ENCODE measurements at regions of chr22 and their contacts with region 1.

Region 1: GRCh38 chr22:37457093-37457893 is 28.9 kb downstream of the MFNG start:
- DNase-seq: no peak
- H3K4me3 ChIP-seq: no peak overlapping the region
- H3K27me3 ChIP-seq: no peaks in the 10 kb centered on the region; the same call in 1 of the 2 replicates
- CTCF ChIP-seq: peak; percentile 94

Region 2: DNA sequence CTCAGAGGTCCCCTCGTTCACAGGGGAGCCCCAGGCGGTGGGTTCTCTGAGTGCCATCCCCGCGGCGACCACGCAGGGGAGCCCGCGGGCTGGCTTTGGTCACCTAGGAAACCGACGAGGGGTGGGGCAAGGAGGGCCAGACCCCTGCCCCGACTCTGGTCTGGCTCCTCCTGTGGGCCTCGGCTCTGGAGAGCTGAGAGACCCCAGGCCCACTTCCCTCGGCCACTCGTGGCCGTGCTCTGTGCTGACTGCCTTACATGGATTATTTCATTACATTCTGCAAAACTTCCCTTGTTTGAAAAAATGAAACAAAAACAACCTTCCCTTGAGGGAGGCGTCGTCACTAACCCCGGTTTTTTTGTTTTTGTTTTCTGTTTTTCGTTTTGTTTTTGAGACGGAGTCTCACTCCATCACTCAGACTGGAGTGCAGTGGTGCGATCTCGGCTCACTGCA is 190.1 kb before region 1 on chr22:
- CTCF ChIA-PET with region 1: interaction called, 13 read pairs
- POLR2A ChIA-PET with region 1: no interaction called
- DNase-seq: no peak
- H3K4me3 ChIP-seq: peak overlapping the region; percentile 41
- H3K27me3 ChIP-seq: peaks cover 6% of the 10 kb centered on the region
- CTCF ChIP-seq: peak; percentile 95

Region 3: DNA sequence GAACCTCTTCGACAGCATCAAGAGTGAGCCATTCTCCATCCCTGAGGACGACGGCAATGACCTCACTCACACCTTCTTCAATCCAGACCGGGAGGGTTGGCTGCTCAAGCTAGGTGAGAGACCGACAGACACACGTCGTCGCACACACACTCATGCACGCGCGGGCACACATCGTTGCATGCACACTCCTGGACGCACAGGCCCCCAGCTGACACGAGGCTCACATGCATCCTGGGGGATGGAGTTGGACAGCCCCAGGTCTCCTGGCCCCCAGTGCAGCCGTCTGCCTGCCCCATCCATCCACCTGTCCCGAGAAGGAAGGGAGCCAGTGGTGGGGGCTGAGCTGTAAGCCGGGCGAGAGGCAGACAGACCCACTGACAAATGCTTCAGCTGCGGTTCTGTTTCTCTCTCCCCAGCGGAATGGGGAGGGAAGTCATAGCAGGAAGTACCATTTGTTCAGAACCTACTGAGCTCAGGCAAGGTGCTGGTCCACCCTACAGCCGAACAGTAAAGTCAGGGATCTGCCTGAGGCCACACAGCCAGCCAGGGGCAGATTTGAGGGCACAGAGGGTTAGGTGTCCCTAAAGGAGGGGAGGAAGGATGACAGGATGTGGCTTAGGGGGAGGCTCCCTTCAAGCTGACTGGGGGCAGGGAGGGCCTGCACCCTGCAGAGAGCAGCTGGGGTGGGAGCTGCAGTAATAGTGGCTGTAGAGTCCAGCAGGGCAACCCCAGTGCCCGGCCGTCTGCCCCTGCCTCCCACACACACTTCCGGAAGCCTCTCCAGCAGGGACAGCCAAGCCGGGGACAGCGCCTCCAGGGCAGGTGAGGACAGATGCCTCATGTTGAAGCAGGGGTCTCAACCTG is 147.8 kb before region 1 on chr22:
- CTCF ChIA-PET with region 1: interaction called, 223 read pairs
- POLR2A ChIA-PET with region 1: no interaction called
- DNase-seq: no peak
- H3K4me3 ChIP-seq: no peak overlapping the region
- H3K27me3 ChIP-seq: no peaks in the 10 kb centered on the region
- CTCF ChIP-seq: 0 out of 2 replicates have a peak, but pooled peaks have one; percentile 3

Region 4: DNA sequence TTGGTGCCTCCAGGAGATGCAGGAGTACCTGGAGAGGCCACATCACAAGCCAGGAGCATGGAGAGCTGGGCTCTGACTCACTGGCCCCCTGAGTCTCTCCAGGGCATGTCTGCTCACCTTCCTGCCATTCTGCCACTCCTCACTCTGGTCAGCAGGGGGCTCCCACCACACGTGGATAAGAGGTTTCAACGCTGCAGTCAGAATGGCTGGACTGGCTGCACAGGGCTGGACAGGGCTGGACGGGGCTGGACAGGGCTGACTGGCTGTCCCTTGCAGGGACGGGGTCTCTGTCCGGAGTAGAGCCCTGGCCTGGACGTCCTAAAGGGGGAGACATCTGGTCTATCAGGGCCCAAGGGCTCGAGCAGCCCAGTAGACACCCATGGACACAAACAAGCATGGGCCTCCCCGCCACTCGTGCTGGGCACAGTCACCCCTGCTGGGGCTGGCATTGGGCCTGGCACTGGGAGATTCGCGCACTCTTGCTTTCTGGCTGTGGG is 140.4 kb before region 1 on chr22:
- CTCF ChIA-PET with region 1: interaction called, 223 read pairs
- POLR2A ChIA-PET with region 1: no interaction called
- DNase-seq: no peak
- H3K4me3 ChIP-seq: no peak overlapping the region
- H3K27me3 ChIP-seq: no peaks in the 10 kb centered on the region
- CTCF ChIP-seq: peak; percentile 93

Region 5: DNA sequence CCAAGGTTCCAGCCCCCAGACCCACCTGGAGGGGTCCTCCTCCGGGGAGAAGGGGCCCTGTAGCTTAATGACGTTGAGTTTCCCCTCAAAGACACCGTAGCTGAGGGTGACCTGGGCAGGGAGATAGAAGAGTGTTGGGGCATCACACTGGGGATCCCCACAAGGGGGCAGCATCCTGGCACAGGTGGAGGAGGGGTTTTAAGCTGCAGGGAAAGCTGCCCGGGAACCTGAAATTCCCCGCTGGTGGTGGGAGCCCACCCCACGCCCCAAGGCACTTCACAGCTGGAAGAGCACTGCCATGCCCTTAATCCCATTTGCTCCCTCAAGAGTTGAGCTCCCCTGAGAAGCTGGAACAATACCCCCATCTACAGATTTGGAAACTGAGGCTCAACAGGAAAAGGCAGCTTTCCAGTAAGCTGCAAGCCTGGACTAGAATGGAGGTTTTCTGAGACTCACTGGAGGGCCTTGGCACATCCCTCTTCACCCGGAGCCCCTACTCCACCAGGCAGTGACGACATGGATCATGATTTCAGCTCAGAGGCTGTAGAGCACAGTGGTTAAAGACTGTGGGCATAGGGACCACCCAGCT is 15.2 kb after region 1 on chr22:
- CTCF ChIA-PET with region 1: interaction called, 11 read pairs
- POLR2A ChIA-PET with region 1: no interaction called
- DNase-seq: no peak
- H3K4me3 ChIP-seq: no peak overlapping the region
- H3K27me3 ChIP-seq: peaks cover 52% of the 10 kb centered on the region
- CTCF ChIP-seq: peak; percentile 68